Heart right ventricle (tissue), 16 donors: ENCODE measurements at regions of chr1 and their contacts with region 1.

Region 1: GRCh38 chr1:27662707-27663393 is 9.1 kb downstream of the IFI6 start:
- DNase-seq: peak; percentile 73 to 86
- ATAC-seq: peak; percentile 49 to 75 (median 68)
- H3K4me3 ChIP-seq: no peak overlapping the region
- H3K27ac ChIP-seq: peak overlapping the region in 9 of 10 donors; percentile 23 to 85 (median 76)
- H3K4me1 ChIP-seq: peaks cover 8 to 65% (median 38%) of the 10 kb centered on the region in 9 donors
- H3K27me3 ChIP-seq: no peaks in the 10 kb centered on the region
- CTCF ChIP-seq: peak; percentile 85 to 94 (median 91)

Region 2: DNA sequence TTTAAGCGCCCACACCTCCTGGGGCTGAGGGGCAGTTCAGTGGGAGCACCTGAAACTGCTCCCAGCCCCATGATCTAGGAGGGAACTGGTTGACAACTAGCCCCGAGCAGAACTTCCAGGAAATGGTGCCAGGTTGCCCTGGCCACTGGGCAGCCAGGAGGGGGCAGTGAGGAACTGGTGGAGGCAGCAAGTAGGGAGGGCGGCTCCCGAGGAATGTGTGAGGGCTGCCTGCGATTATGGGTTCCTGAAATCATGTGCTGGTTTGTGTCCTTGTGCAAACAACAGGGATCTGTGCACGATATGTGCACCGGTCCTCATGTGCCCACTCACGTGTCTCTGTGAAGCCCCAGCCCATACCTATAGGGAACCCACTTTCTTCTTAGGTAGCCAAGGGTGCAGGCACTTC is 260.5 kb before region 1 on chr1:
- intact Hi-C with region 1: loop called in 8 of 10 experiments (anchors 5 to 10 kb)
- DNase-seq: peak; percentile 73 to 79
- ATAC-seq: peak; percentile 24 to 53 (median 41)
- H3K4me3 ChIP-seq: no peak overlapping the region
- H3K27ac ChIP-seq: peak overlapping the region; percentile 68 to 91 (median 82)
- H3K4me1 ChIP-seq: peaks cover 41 to 100% (median 86%) of the 10 kb centered on the region in 9 donors
- H3K27me3 ChIP-seq: no peaks in the 10 kb centered on the region
- CTCF ChIP-seq: peak; percentile 25 to 68 (median 58)

Region 3: GRCh38 chr1:27556781-27557595 is 105.9 kb before region 1 on chr1:
- intact Hi-C with region 1: loop called in 5 of 10 experiments (anchors 5 kb)
- DNase-seq: peak; percentile 93 to 96
- ATAC-seq: peak; percentile 65 to 78 (median 72)
- H3K4me3 ChIP-seq: peak overlapping the region in 8 of 10 donors; percentile 10 to 32 (median 22)
- H3K27ac ChIP-seq: peak overlapping the region; percentile 74 to 96 (median 86)
- H3K4me1 ChIP-seq: peaks cover 43 to 84% (median 69%) of the 10 kb centered on the region in 9 donors
- H3K27me3 ChIP-seq: no peaks in the 10 kb centered on the region
- CTCF ChIP-seq: peak; percentile 92 to 98 (median 96)

Region 4: GRCh38 chr1:27609210-27609555 is 53.7 kb before region 1 on chr1:
- intact Hi-C with region 1: loop called (anchors 1 to 2 kb)
- DNase-seq: no peak
- ATAC-seq: peak in 1 of 8 donors; percentile 4
- H3K4me3 ChIP-seq: no peak overlapping the region
- H3K27ac ChIP-seq: no peak overlapping the region
- H3K4me1 ChIP-seq: peaks cover 0 to 48% (median 25%) of the 10 kb centered on the region in 9 donors
- H3K27me3 ChIP-seq: no peaks in the 10 kb centered on the region
- CTCF ChIP-seq: no peak

Region 5: GRCh38 chr1:27630859-27631491 is 31.9 kb before region 1 on chr1:
- intact Hi-C with region 1: loop called in 1 of 10 experiments (anchors 1 kb)
- DNase-seq: peak in 1 of 2 donors; percentile 56
- ATAC-seq: peak; percentile 25 to 88 (median 68)
- H3K4me3 ChIP-seq: no peak overlapping the region
- H3K27ac ChIP-seq: peak overlapping the region; percentile 78 to 93 (median 85)
- H3K4me1 ChIP-seq: peaks cover 18 to 98% (median 55%) of the 10 kb centered on the region in 9 donors
- H3K27me3 ChIP-seq: peaks cover 0 to 14% (median 0%) of the 10 kb centered on the region in 7 donors
- CTCF ChIP-seq: no peak

Region 6: GRCh38 chr1:27643701-27644625 is 18.9 kb before region 1 on chr1:
- intact Hi-C with region 1: loop called in 1 of 10 experiments (anchors 2 kb)
- DNase-seq: peak in 1 of 2 donors; percentile 57
- ATAC-seq: peak; percentile 14 to 77 (median 67)
- H3K4me3 ChIP-seq: no peak overlapping the region
- H3K27ac ChIP-seq: peak overlapping the region in 2 of 10 donors; percentile 5 to 31
- H3K4me1 ChIP-seq: peaks cover 6 to 32% (median 10%) of the 10 kb centered on the region in 9 donors
- H3K27me3 ChIP-seq: no peaks in the 10 kb centered on the region
- CTCF ChIP-seq: peak; percentile 69 to 87 (median 80)